GM12878 (cell line): ENCODE measurements at regions of chr10 and their contacts with region 1.

Region 1: GRCh38 chr10:107409522-107409921 is 245.0 kb upstream of the SORCS1 start:
- DNase-seq: no peak
- ATAC-seq: peak; percentile 81
- H3K4me3 ChIP-seq: no peak overlapping the region
- H3K27ac ChIP-seq: no peak overlapping the region
- H3K4me1 ChIP-seq: no peaks in the 10 kb centered on the region
- H3K27me3 ChIP-seq: no peaks in the 10 kb centered on the region
- CTCF ChIP-seq: peak; percentile 32 to 64 (median 47); a peak in 5 of 6 replicates
- EP300 ChIP-seq: no peak
- POLR2A ChIP-seq: no peak
- RAD21 ChIP-seq: peak; percentile 88

Region 2: GRCh38 chr10:106652279-106652678 is 757.2 kb before region 1 on chr10:
- CTCF ChIA-PET with region 1: no interaction called
- POLR2A ChIA-PET with region 1: no interaction called
- RAD21 ChIA-PET with region 1: no interaction called
- SMC1A ChIA-PET with region 1: no interaction called
- in situ Hi-C with region 1: no loop called
- intact Hi-C with region 1: no loop called
- DNase-seq: peak; percentile 11
- ATAC-seq: peak; percentile 73
- H3K4me3 ChIP-seq: no peak overlapping the region
- H3K27ac ChIP-seq: no peak overlapping the region
- H3K4me1 ChIP-seq: no peaks in the 10 kb centered on the region
- H3K27me3 ChIP-seq: no peaks in the 10 kb centered on the region
- CTCF ChIP-seq: no peak
- EP300 ChIP-seq: peak; percentile 70 to 72; a peak in 2 of 4 replicates
- POLR2A ChIP-seq: no peak
- RAD21 ChIP-seq: no peak

Region 3: GRCh38 chr10:107115185-107115584 is 294.3 kb before region 1 on chr10:
- CTCF ChIA-PET with region 1: no interaction called
- POLR2A ChIA-PET with region 1: no interaction called
- RAD21 ChIA-PET with region 1: no interaction called
- SMC1A ChIA-PET with region 1: no interaction called
- in situ Hi-C with region 1: no loop called
- intact Hi-C with region 1: no loop called
- DNase-seq: no peak
- ATAC-seq: no peak
- H3K4me3 ChIP-seq: no peak overlapping the region
- H3K27ac ChIP-seq: no peak overlapping the region
- H3K4me1 ChIP-seq: no peaks in the 10 kb centered on the region
- H3K27me3 ChIP-seq: no peaks in the 10 kb centered on the region
- CTCF ChIP-seq: no peak
- EP300 ChIP-seq: no peak
- POLR2A ChIP-seq: no peak
- RAD21 ChIP-seq: no peak

Region 4: DNA sequence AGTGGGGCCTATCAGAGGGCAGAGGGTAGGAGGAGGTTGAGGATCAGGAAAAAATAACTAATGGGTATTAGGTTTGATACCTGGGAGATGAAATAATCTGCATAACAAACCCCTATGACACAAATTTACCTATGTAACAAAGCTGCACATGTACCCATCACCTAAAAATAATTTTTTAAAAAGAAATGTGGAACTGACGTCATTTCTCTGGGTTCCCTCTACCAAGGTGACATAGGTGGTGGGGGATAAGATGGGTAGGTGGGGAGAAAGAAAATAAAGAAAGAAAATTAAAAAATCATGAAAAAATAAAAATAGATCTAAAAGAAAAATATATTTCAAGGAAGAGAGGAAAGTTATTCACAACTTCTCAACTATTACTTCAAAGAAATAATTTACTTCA is 91.9 kb before region 1 on chr10:
- CTCF ChIA-PET with region 1: no interaction called
- POLR2A ChIA-PET with region 1: no interaction called
- RAD21 ChIA-PET with region 1: no interaction called
- SMC1A ChIA-PET with region 1: no interaction called
- in situ Hi-C with region 1: no loop called
- intact Hi-C with region 1: no loop called
- DNase-seq: no peak
- ATAC-seq: no peak
- H3K4me3 ChIP-seq: no peak overlapping the region
- H3K27ac ChIP-seq: no peak overlapping the region
- H3K4me1 ChIP-seq: no peaks in the 10 kb centered on the region
- H3K27me3 ChIP-seq: no peaks in the 10 kb centered on the region
- CTCF ChIP-seq: no peak
- EP300 ChIP-seq: no peak
- POLR2A ChIP-seq: no peak
- RAD21 ChIP-seq: no peak

Region 5: DNA sequence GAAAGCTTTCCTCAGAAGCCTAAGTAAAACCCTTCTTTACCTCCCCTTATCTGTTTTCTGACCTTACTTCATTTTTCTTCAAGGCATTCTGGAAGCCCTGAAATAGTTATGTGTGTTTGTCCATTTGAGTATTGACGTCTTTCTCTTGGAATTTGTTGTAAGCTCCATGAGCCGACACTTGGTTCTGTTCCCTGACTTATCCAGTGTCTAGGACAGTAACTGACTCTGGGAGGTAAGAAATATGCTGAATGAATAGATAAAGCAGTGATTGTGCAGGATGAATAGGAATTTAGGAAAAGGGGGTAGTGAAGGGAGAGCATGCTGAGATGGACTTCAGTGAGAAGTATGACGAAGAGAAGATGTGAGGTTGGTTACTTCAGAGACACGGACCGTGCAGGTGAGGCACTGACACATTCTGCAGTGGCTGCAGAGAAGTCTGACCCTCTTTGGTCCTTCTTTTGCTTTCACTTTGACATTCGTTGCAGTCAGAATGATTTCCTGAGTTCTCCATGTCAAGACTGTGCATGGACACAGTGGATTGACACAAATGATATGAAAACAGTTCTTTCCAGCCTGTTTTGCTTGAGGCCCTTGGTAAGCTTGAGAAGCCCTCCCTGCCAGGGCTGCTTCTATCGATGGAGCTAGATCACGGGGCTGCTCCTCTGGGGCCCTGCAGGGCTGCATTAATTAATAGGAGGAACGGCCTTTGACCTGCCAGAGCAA is 16.5 kb after region 1 on chr10:
- CTCF ChIA-PET with region 1: interaction called, 13 read pairs
- POLR2A ChIA-PET with region 1: interaction called, 3 read pairs
- RAD21 ChIA-PET with region 1: interaction called, 4 read pairs
- SMC1A ChIA-PET with region 1: interaction called, 11 read pairs
- in situ Hi-C with region 1: no loop called
- intact Hi-C with region 1: no loop called
- DNase-seq: no peak
- ATAC-seq: peak; percentile 83
- H3K4me3 ChIP-seq: peak overlapping the region; percentile 22; the same call in 1 of the 2 replicates
- H3K27ac ChIP-seq: no peak overlapping the region
- H3K4me1 ChIP-seq: no peaks in the 10 kb centered on the region; the same call in 1 of the 2 replicates
- H3K27me3 ChIP-seq: no peaks in the 10 kb centered on the region
- CTCF ChIP-seq: no peak
- EP300 ChIP-seq: no peak
- POLR2A ChIP-seq: no peak
- RAD21 ChIP-seq: no peak

Region 6: DNA sequence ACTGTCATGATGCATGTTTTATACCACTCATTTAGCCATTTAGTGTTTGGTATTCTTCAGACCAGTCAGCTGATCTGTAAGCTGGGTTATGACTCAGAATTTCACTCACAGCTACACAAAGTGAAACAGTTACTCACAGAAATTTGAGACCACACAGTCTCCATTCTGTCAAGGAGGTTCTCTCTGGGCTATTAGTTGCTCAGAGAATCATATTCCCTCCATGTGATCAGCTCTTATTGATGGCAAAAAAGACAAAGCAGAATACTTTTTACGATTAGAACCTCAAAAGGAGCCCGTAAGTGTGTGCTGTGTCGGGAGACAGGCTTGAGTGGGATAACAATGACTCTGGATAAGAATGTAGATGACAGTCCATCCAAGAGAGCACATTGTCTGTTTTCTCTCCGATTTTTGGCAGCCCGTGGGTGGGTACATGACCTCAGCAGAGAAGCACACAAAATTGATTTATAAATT is 32.5 kb after region 1 on chr10:
- CTCF ChIA-PET with region 1: interaction called, 26 read pairs
- POLR2A ChIA-PET with region 1: no interaction called
- RAD21 ChIA-PET with region 1: interaction called, 46 read pairs
- SMC1A ChIA-PET with region 1: interaction called, 51 read pairs
- in situ Hi-C with region 1: no loop called
- intact Hi-C with region 1: no loop called
- DNase-seq: peak; percentile 68
- ATAC-seq: peak; percentile 96
- H3K4me3 ChIP-seq: no peak overlapping the region
- H3K27ac ChIP-seq: no peak overlapping the region
- H3K4me1 ChIP-seq: peaks cover 19% of the 10 kb centered on the region; the same call in 1 of the 2 replicates
- H3K27me3 ChIP-seq: no peaks in the 10 kb centered on the region
- CTCF ChIP-seq: no peak
- EP300 ChIP-seq: peak; percentile 63 to 90
- POLR2A ChIP-seq: no peak
- RAD21 ChIP-seq: no peak; the same call in 1 of the 2 replicates

Region 7: DNA sequence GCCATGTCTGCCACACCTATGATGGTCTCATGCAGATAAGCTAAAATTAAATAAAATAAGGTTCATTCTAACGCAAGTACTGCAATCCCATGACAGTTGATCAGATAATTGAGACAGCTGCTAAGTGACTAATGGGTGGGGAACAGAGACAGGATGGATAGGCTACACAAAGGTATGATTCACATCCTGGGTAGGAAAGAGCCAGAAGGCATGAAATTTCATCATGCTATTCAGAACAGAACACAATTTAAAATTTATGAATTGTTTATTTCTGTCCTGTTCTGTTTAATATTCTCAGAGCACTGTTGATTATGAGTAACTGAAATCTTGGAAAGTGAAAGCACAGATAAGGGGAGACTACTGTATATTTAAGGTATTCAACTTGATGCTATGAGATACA is 136.8 kb after region 1 on chr10:
- CTCF ChIA-PET with region 1: interaction called, 9 read pairs
- POLR2A ChIA-PET with region 1: no interaction called
- RAD21 ChIA-PET with region 1: interaction called, 10 read pairs
- SMC1A ChIA-PET with region 1: interaction called, 18 read pairs
- in situ Hi-C with region 1: no loop called
- intact Hi-C with region 1: no loop called
- DNase-seq: no peak
- ATAC-seq: no peak
- H3K4me3 ChIP-seq: no peak overlapping the region
- H3K27ac ChIP-seq: no peak overlapping the region
- H3K4me1 ChIP-seq: no peaks in the 10 kb centered on the region
- H3K27me3 ChIP-seq: no peaks in the 10 kb centered on the region
- CTCF ChIP-seq: no peak
- EP300 ChIP-seq: no peak
- POLR2A ChIP-seq: no peak
- RAD21 ChIP-seq: no peak

Region 8: GRCh38 chr10:107740962-107741690 is 331.6 kb after region 1 on chr10:
- CTCF ChIA-PET with region 1: no interaction called
- POLR2A ChIA-PET with region 1: no interaction called
- RAD21 ChIA-PET with region 1: no interaction called
- SMC1A ChIA-PET with region 1: interaction called, 12 read pairs
- in situ Hi-C with region 1: no loop called
- intact Hi-C with region 1: no loop called
- DNase-seq: no peak
- ATAC-seq: peak; percentile 67
- H3K4me3 ChIP-seq: no peak overlapping the region
- H3K27ac ChIP-seq: no peak overlapping the region
- H3K4me1 ChIP-seq: no peaks in the 10 kb centered on the region
- H3K27me3 ChIP-seq: no peaks in the 10 kb centered on the region
- CTCF ChIP-seq: no peak
- EP300 ChIP-seq: no peak
- POLR2A ChIP-seq: no peak
- RAD21 ChIP-seq: no peak

Region 9: GRCh38 chr10:107814865-107815487 is 405.5 kb after region 1 on chr10:
- CTCF ChIA-PET with region 1: interaction called, 96 read pairs
- POLR2A ChIA-PET with region 1: no interaction called
- RAD21 ChIA-PET with region 1: interaction called, 86 read pairs
- SMC1A ChIA-PET with region 1: interaction called, 129 read pairs
- in situ Hi-C with region 1: loop called (anchors 5 kb)
- intact Hi-C with region 1: loop called (anchors 1 kb)
- DNase-seq: peak; percentile 20
- ATAC-seq: peak; percentile 95
- H3K4me3 ChIP-seq: no peak overlapping the region
- H3K27ac ChIP-seq: no peak overlapping the region
- H3K4me1 ChIP-seq: no peaks in the 10 kb centered on the region
- H3K27me3 ChIP-seq: no peaks in the 10 kb centered on the region
- CTCF ChIP-seq: peak; percentile 59 to 81 (median 74)
- EP300 ChIP-seq: no peak
- POLR2A ChIP-seq: no peak
- RAD21 ChIP-seq: peak; percentile 87

Region 10: GRCh38 chr10:108544494-108545120 is 1135.1 kb after region 1 on chr10:
- CTCF ChIA-PET with region 1: interaction called, 4 read pairs
- POLR2A ChIA-PET with region 1: no interaction called
- RAD21 ChIA-PET with region 1: no interaction called
- SMC1A ChIA-PET with region 1: interaction called, 4 read pairs
- in situ Hi-C with region 1: loop called (anchors 25 kb)
- intact Hi-C with region 1: loop called (anchors 5 kb)
- DNase-seq: no peak
- ATAC-seq: peak; percentile 90
- H3K4me3 ChIP-seq: no peak overlapping the region
- H3K27ac ChIP-seq: no peak overlapping the region
- H3K4me1 ChIP-seq: no peaks in the 10 kb centered on the region; the same call in 1 of the 2 replicates
- H3K27me3 ChIP-seq: no peaks in the 10 kb centered on the region
- CTCF ChIP-seq: peak; percentile 79 to 97 (median 92)
- EP300 ChIP-seq: no peak
- POLR2A ChIP-seq: no peak
- RAD21 ChIP-seq: peak; percentile 90